Caco-2 (cell line): ENCODE measurements at regions of chr2 and their contacts with region 1.

Region 1: DNA sequence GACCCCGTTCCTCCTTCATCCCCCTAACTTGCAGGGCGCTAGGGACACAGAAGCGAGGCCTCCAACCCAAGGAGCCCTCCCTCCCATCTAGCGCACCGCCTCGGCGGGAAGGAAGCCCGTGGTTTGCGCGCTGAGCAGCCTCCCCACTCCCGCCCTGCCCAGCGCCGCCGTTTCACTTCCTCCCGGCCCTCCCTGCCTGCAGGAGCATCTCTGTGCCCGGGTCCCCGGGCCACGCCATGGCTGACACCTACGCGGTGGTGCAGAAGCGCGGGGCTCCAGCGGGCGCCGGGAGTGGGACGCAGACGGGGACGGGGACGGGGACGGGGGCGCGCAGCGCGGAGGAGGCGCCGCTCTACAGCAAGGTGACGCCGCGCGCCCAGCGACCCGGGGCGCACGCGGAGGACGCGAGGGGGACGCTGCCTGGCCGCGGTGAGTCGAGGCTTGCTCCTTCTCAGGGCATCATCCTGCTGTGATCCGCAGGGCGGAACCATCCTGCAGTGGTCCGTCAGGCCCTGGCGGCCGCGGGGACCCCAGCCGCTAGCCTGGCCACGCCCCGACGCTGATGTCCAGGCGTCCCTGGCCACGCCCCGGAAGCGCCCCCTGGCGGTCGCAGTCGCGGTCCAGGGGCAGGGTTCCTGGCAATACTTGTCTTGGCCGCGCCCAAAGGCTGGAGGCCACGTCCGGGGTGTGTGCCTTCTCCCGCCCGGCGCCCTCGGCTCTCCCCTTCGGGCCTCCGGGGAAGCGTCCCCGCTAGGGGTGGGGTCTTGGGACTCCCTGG is 16.4 kb downstream of the PTPN18 start:
- DNase-seq: peak; percentile 93 to 98
- H3K4me3 ChIP-seq: peak overlapping the region; percentile 92
- H3K4me3 Mint-ChIP-seq: peak overlapping the region; percentile 98
- H3K27ac Mint-ChIP-seq: peak overlapping the region; percentile 91
- H3K4me1 ChIP-seq: peaks cover 6% of the 10 kb centered on the region
- H3K4me1 Mint-ChIP-seq: peaks cover 23% of the 10 kb centered on the region
- H3K27me3 ChIP-seq: no peaks in the 10 kb centered on the region
- H3K27me3 Mint-ChIP-seq: no peaks in the 10 kb centered on the region
- CTCF ChIP-seq: peak; percentile 93 to 95

Region 2: DNA sequence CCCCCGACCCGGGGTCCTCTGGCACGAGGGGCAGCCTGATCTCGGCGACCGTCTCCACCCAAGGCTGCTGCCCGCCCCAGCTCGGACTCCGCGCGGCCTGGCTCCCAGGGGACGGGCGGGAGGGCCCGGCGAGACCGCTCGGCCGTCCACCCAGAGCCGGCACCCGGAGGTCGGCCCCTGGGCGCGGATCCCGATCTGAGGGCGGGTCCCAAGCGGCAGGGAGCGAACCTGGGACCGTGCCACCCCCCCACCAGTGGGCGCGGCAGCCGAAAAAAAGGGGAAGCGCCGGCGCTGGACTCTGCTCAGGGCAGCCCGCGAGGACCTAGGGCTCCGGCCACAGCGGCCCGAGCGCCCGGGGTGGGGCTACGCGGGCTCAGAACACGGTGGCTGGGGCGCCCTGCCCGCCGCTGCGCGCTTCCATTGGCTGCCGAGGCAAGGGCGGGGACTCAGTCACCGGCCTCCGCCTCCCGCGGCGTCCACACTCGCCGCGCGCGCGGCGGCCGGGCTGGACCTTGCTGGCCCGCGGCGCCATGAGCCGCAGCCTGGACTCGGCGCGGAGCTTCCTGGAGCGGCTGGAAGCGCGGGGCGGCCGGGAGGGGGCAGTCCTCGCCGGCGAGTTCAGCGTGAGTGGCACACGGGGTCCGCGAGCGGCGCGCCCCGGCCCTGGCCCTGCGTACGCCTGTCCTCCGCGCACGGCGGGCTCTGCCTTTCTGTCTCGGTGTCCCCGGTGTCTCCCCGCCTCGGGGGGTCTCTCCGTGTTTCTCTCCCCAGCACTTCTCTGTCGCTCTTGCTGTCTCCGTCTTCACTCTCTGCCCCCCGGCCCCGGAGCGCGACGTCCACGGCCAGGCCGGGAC is 16.4 kb before region 1 on chr2 and contains the start of gene PTPN18:
- CTCF ChIA-PET with region 1: interaction called, 16 read pairs
- POLR2A ChIA-PET with region 1: interaction called, 3 read pairs
- intact Hi-C with region 1: loop called (anchors 1 kb)
- DNase-seq: peak; percentile 90 to 94
- H3K4me3 ChIP-seq: peak within 1 kb of the TSS; percentile 75
- H3K4me3 Mint-ChIP-seq: peak within 1 kb of the TSS; percentile 90
- H3K27ac Mint-ChIP-seq: peak within 1 kb of the TSS; percentile 86
- H3K4me1 ChIP-seq: peaks cover 5% of the 10 kb centered on the region; the same call in 1 of the 2 replicates
- H3K4me1 Mint-ChIP-seq: peaks cover 10% of the 10 kb centered on the region
- H3K27me3 ChIP-seq: no peaks in the 10 kb centered on the region
- H3K27me3 Mint-ChIP-seq: no peaks in the 10 kb centered on the region
- CTCF ChIP-seq: peak; percentile 47 to 53
- total RNA-seq, gene PTPN18: 46.5 and 51.0 TPM in 2 replicates

Region 3: DNA sequence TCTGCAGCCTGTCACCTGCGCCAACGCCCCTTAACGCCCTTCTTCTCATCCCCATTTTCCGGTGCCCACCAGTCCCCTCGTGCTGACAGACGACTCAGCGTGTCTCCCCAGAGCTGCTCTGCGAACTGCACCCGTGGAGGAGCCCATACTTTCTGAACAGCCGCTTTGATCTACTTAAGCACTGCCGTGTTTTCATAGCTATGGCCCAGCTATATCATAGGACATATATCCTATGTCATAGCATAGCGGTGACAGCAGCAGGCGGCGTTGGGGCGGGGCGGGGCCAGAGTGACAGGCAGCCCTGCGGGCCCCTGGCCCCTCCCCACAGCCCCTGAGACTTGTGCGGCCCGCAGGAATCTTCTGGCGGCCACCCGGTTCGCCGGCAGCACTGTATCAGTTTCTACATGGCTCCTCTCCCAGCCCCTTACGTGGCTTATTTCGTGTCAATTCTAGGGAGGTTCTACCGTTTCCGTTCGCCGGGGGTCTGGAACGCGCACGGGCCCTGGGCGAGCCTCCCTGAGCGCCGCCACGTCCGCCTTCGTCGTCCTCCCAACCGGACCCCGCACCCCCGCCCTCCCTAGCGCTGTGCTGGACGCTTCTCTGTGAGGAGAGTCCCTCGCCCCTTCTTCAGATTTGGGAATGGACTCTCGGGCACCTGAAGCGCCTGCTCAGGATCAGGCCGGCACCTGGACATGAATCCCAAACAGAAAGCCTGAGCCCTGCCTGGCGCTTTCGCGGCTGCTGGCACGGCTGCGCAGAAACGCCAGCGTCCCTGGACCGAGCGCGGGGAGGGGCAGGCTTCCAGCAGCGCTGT is 19.0 kb after region 1 on chr2:
- CTCF ChIA-PET with region 1: interaction called, 12 read pairs
- POLR2A ChIA-PET with region 1: interaction called, 4 read pairs
- intact Hi-C with region 1: loop called (anchors 1 kb)
- DNase-seq: peak; percentile 84 to 88
- H3K4me3 ChIP-seq: peak overlapping the region; percentile 91
- H3K4me3 Mint-ChIP-seq: peak overlapping the region; percentile 72
- H3K27ac Mint-ChIP-seq: peak overlapping the region; percentile 74
- H3K4me1 ChIP-seq: peaks cover 21% of the 10 kb centered on the region
- H3K4me1 Mint-ChIP-seq: peaks cover 15% of the 10 kb centered on the region
- H3K27me3 ChIP-seq: no peaks in the 10 kb centered on the region
- H3K27me3 Mint-ChIP-seq: no peaks in the 10 kb centered on the region
- CTCF ChIP-seq: no peak

Region 4: GRCh38 chr2:130744287-130745117 is 372.3 kb after region 1 on chr2:
- CTCF ChIA-PET with region 1: no interaction called
- POLR2A ChIA-PET with region 1: no interaction called
- intact Hi-C with region 1: no loop called
- DNase-seq: peak; percentile 86 to 93
- H3K4me3 ChIP-seq: no peak overlapping the region
- H3K4me3 Mint-ChIP-seq: peak overlapping the region; percentile 51
- H3K27ac Mint-ChIP-seq: peak overlapping the region; percentile 84
- H3K4me1 ChIP-seq: peaks cover 26% of the 10 kb centered on the region
- H3K4me1 Mint-ChIP-seq: peaks cover 25% of the 10 kb centered on the region
- H3K27me3 ChIP-seq: no peaks in the 10 kb centered on the region
- H3K27me3 Mint-ChIP-seq: no peaks in the 10 kb centered on the region
- CTCF ChIP-seq: no peak